Natural killer cell (primary cell): ENCODE measurements at regions of chr22 and their contacts with region 1.

Region 1: GRCh38 chr22:21712894-21713712 is 22.5 kb downstream of the YPEL1 start:
- DNase-seq: peak; percentile 59 to 82
- ATAC-seq: peak; percentile 83 to 98 (median 95)
- H3K4me3 ChIP-seq: no peak overlapping the region
- H3K4me3 Mint-ChIP-seq: no peak overlapping the region
- H3K27ac ChIP-seq: no peak overlapping the region
- H3K27ac Mint-ChIP-seq: peak overlapping the region; percentile 76 to 80
- H3K4me1 ChIP-seq: peaks cover 7% of the 10 kb centered on the region
- H3K4me1 Mint-ChIP-seq: peaks cover 21 to 23% of the 10 kb centered on the region in 2 donors
- H3K27me3 ChIP-seq: no peaks in the 10 kb centered on the region
- H3K27me3 Mint-ChIP-seq: no peaks in the 10 kb centered on the region
- CTCF ChIP-seq: peak; percentile 74

Region 2: GRCh38 chr22:21952586-21953571 is 239.8 kb after region 1 on chr22 and contains the start of gene PPM1F:
- intact Hi-C with region 1: loop called (anchors 2 kb)
- DNase-seq: peak; percentile 96
- ATAC-seq: peak; percentile 91 to 95 (median 94)
- H3K4me3 ChIP-seq: peak within 1 kb of the TSS; percentile 77
- H3K4me3 Mint-ChIP-seq: peak within 1 kb of the TSS; percentile 78
- H3K27ac ChIP-seq: peak within 1 kb of the TSS; percentile 41
- H3K27ac Mint-ChIP-seq: peak within 1 kb of the TSS; percentile 58 to 73
- H3K4me1 ChIP-seq: peaks cover 22% of the 10 kb centered on the region
- H3K4me1 Mint-ChIP-seq: peaks cover 7 to 27% of the 10 kb centered on the region in 2 donors
- H3K27me3 ChIP-seq: no peaks in the 10 kb centered on the region
- H3K27me3 Mint-ChIP-seq: no peaks in the 10 kb centered on the region
- CTCF ChIP-seq: peak; percentile 77
- total RNA-seq, gene PPM1F: 25.1 to 30.3 (median 25.5) TPM